ENCODE measurements at regions of chr2 and their contacts with region 1.

Region 1: DNA sequence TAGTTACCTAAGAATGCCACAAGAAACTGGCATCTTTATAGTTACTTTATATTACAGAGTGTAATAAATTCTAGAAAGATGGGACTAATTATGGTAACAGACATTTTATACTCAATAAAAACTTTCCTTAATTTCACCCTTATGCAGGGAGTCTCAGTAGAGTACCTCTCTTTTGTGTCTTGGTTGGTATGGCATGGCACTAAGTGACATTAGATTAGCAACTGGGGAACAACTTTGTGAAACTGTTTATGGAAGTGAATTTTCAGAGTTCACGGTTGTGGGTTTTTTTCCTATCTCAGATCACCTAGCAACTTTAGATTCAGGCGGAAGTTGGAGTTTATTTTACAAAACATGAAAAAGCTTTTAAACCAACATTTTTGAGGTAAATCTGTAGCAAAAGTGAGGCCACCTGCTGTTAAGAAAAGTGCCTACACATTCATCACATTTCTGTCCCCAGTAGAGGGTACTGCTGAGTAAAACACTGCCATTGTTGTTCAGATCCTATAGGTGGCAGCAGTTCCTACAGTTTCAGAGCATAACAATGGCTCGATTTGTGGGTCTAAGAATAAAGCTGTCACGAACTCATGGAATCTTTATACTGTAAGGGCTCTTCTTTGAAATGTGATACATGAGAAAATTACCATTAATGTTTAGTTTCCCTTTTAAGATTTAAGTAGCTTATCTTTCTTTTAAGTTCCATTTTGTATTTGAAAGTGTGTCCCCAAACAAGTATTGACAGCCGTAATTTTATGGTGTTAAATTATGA is 117.6 kb downstream of the CAMKMT start:
- DNase-seq: peak; percentile 81
- H3K4me3 ChIP-seq: peak overlapping the region in 1 of 2 experiments; percentile 23; a peak in 1 of 4 replicates
- H3K27ac ChIP-seq: peak overlapping the region in 1 of 2 experiments; percentile 65; a peak in 2 of 4 replicates
- H3K4me1 ChIP-seq: peaks cover 0 to 12% of the 10 kb centered on the region in 2 experiments; a peak in 2 of 4 replicates
- H3K27me3 ChIP-seq: no peaks in the 10 kb centered on the region
- CTCF ChIP-seq: peak; percentile 100
- EP300 ChIP-seq: peak; percentile 15 to 49; a peak in 1 of 4 replicates
- RAD21 ChIP-seq: peak; percentile 100

Region 2: DNA sequence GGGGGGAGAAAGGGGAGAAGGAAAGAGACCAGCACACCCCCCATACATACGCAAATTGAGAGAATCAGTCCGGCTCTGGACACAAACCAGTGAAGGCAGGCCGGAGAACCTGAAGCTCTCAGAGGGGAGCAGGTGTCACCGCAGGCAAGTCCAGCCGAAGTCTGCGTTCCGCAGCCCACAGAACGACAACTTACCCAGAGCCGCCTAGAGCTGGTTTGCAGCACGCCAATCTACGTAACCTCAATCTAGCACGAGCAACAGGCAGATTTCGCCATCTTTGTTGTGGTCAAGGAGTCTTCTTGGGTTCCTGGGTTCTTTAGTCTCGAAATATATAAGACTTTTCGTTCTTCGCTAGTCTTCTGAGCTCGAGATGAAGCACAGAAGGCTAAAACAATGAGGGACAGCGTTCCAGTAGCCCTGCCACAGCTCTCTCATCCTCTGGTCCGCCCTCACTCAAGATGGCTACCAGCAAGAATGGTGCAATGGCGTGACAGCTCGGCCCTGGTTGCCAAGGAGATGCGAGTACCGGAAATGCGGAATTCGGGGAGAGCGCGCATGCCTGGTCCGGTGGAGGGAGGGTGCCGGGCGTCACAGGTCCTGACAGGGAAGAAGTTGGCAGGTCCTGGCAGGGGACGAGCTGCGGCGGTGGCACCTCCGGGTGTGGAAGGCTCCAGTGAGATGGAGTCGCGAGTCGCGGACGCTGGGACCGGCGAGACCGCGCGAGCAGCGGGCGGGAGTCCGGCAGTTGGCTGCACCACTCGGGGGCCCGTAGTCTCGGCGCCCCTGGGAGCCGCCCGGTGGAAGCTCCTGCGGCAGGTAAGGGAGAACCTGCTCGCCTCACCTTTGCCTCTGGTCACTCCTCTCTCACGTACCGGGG is 117.7 kb before region 1 on chr2 and contains the starts of genes CAMKMT and PREPL:
- CTCF ChIA-PET with region 1: interaction called, 14 read pairs
- POLR2A ChIA-PET with region 1: no interaction called
- DNase-seq: peak; percentile 99
- H3K4me3 ChIP-seq: peak within 1 kb of the TSS; percentile 89 to 91
- H3K27ac ChIP-seq: peak within 1 kb of the TSS; percentile 95 to 99
- H3K4me1 ChIP-seq: peaks cover 9 to 10% of the 10 kb centered on the region in 2 experiments; a peak in 2 of 4 replicates
- H3K27me3 ChIP-seq: no peaks in the 10 kb centered on the region
- CTCF ChIP-seq: 0 out of 2 replicates have a peak, but pooled peaks have one; percentile 7
- EP300 ChIP-seq: no peak; a peak in 1 of 4 replicates
- RAD21 ChIP-seq: 0 out of 2 replicates have a peak, but pooled peaks have one; percentile 19
- polyA plus RNA-seq, gene CAMKMT: 5.9 and 6.2 TPM in 2 replicates
- polyA plus RNA-seq, gene PREPL: 22.6 and 32.8 TPM in 2 replicates

Region 3: GRCh38 chr2:44490726-44491125 is 11.4 kb after region 1 on chr2:
- CTCF ChIA-PET with region 1: interaction called, 95 read pairs
- POLR2A ChIA-PET with region 1: no interaction called
- DNase-seq: no peak
- H3K4me3 ChIP-seq: no peak overlapping the region
- H3K27ac ChIP-seq: no peak overlapping the region
- H3K4me1 ChIP-seq: no peaks in the 10 kb centered on the region; a peak in 1 of 4 replicates
- H3K27me3 ChIP-seq: no peaks in the 10 kb centered on the region
- CTCF ChIP-seq: no peak
- EP300 ChIP-seq: no peak
- RAD21 ChIP-seq: no peak

Region 4: GRCh38 chr2:44596537-44597320 is 117.4 kb after region 1 on chr2:
- CTCF ChIA-PET with region 1: interaction called, 28 read pairs
- POLR2A ChIA-PET with region 1: no interaction called
- DNase-seq: no peak
- H3K4me3 ChIP-seq: no peak overlapping the region
- H3K27ac ChIP-seq: no peak overlapping the region
- H3K4me1 ChIP-seq: peaks cover 0 to 17% of the 10 kb centered on the region in 2 experiments; a peak in 2 of 4 replicates
- H3K27me3 ChIP-seq: no peaks in the 10 kb centered on the region
- CTCF ChIP-seq: no peak
- EP300 ChIP-seq: no peak
- RAD21 ChIP-seq: no peak

Region 5: DNA sequence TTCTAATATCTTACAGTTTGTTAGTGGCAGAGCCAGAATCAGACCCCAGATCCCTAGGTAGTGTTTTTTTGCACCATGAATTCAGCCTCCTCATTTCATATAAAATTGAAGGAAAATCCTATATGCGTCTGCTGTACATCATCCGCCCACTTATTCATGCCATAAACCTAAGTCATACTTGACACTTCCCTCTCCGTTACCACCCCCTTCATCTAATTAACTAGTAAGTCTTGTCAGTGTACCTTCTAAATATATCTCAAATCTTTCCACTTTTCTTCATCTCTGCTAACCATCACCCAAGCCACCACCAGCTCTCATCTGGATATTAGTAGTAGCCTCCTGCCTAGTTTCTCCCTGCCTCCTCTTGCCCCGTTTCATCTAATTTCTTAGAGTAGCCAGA is 213.5 kb after region 1 on chr2:
- CTCF ChIA-PET with region 1: interaction called, 66 read pairs
- POLR2A ChIA-PET with region 1: no interaction called
- DNase-seq: no peak
- H3K4me3 ChIP-seq: no peak overlapping the region
- H3K27ac ChIP-seq: peak overlapping the region in 1 of 2 experiments; percentile 98; a peak in 2 of 4 replicates
- H3K4me1 ChIP-seq: peaks cover 0 to 50% of the 10 kb centered on the region in 2 experiments; a peak in 2 of 4 replicates
- H3K27me3 ChIP-seq: no peaks in the 10 kb centered on the region
- CTCF ChIP-seq: no peak
- EP300 ChIP-seq: no peak
- RAD21 ChIP-seq: no peak

Region 6: GRCh38 chr2:44778671-44779476 is 299.6 kb after region 1 on chr2:
- CTCF ChIA-PET with region 1: interaction called, 88 read pairs
- POLR2A ChIA-PET with region 1: no interaction called
- DNase-seq: no peak
- H3K4me3 ChIP-seq: no peak overlapping the region
- H3K27ac ChIP-seq: no peak overlapping the region; a peak in 1 of 4 replicates
- H3K4me1 ChIP-seq: peaks cover 0 to 46% of the 10 kb centered on the region in 2 experiments; a peak in 2 of 4 replicates
- H3K27me3 ChIP-seq: no peaks in the 10 kb centered on the region
- CTCF ChIP-seq: no peak
- EP300 ChIP-seq: no peak
- RAD21 ChIP-seq: no peak

Measured in SK-N-SH (cell line).